ENCODE measurements at regions of chr10 and their contacts with region 1.

Region 1: GRCh38 chr10:68526626-68527307 is 556 bp downstream of the SLC25A16 start:
- DNase-seq: no peak
- ATAC-seq: peak; percentile 75
- H3K4me3 ChIP-seq: peak overlapping the region; percentile 74
- H3K27ac ChIP-seq: peak overlapping the region; percentile 47
- H3K4me1 ChIP-seq: no peaks in the 10 kb centered on the region
- H3K27me3 ChIP-seq: no peaks in the 10 kb centered on the region
- CTCF ChIP-seq: no peak
- POLR2A ChIP-seq: no peak
- RAD21 ChIP-seq: no peak

Region 2: GRCh38 chr10:68543004-68543918 is 16.5 kb after region 1 on chr10:
- CTCF ChIA-PET with region 1: no interaction called
- POLR2A ChIA-PET with region 1: no interaction called
- dilution Hi-C with region 1: no loop called
- in situ Hi-C with region 1: no loop called
- intact Hi-C with region 1: loop called (anchors 2 kb)
- DNase-seq: peak; percentile 84
- ATAC-seq: peak; percentile 70
- H3K4me3 ChIP-seq: no peak overlapping the region
- H3K27ac ChIP-seq: no peak overlapping the region
- H3K4me1 ChIP-seq: peaks cover 14% of the 10 kb centered on the region
- H3K27me3 ChIP-seq: no peaks in the 10 kb centered on the region
- CTCF ChIP-seq: no peak
- POLR2A ChIP-seq: no peak
- RAD21 ChIP-seq: no peak

Region 3: DNA sequence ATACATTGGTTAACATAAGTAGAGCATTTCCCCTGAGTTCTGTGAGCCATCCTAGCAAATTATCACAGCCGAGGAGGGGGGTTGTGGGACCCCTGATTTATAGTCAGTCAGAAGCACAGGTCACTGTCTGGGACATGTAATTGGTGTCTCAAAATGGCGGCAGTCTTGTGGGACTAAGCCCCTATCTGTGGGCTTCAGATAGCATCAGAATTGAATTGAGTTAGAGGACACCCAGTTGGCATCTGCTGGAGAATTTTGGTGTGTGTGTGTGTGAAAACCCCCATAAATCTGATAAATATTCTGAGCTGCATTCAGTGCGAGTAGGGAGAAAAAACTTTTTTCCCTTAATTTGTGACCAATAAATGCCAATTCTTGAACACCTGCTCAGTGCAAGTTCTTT is 26.8 kb after region 1 on chr10:
- CTCF ChIA-PET with region 1: no interaction called
- POLR2A ChIA-PET with region 1: no interaction called
- dilution Hi-C with region 1: no loop called
- in situ Hi-C with region 1: no loop called
- intact Hi-C with region 1: no loop called
- DNase-seq: no peak
- ATAC-seq: no peak
- H3K4me3 ChIP-seq: no peak overlapping the region
- H3K27ac ChIP-seq: no peak overlapping the region
- H3K4me1 ChIP-seq: peaks cover 8% of the 10 kb centered on the region
- H3K27me3 ChIP-seq: no peaks in the 10 kb centered on the region
- CTCF ChIP-seq: no peak
- POLR2A ChIP-seq: no peak
- RAD21 ChIP-seq: no peak

Region 4: GRCh38 chr10:68700197-68700596 is 173.4 kb after region 1 on chr10:
- CTCF ChIA-PET with region 1: no interaction called
- POLR2A ChIA-PET with region 1: interaction called, 16 read pairs
- dilution Hi-C with region 1: no loop called
- in situ Hi-C with region 1: no loop called
- intact Hi-C with region 1: no loop called
- DNase-seq: no peak
- ATAC-seq: no peak
- H3K4me3 ChIP-seq: no peak overlapping the region
- H3K27ac ChIP-seq: no peak overlapping the region
- H3K4me1 ChIP-seq: no peaks in the 10 kb centered on the region
- H3K27me3 ChIP-seq: no peaks in the 10 kb centered on the region
- CTCF ChIP-seq: no peak
- POLR2A ChIP-seq: no peak
- RAD21 ChIP-seq: no peak